Colonic mucosa (tissue), 4 donors: ENCODE measurements at regions of chr2 and their contacts with region 1.

Region 1: GRCh38 chr2:137659612-137660011 is 304.7 kb upstream of the HNMT start:
- DNase-seq: no peak
- H3K4me3 ChIP-seq: no peak overlapping the region
- H3K27ac ChIP-seq: no peak overlapping the region
- H3K4me1 ChIP-seq: no peaks in the 10 kb centered on the region
- H3K27me3 ChIP-seq: no peaks in the 10 kb centered on the region
- CTCF ChIP-seq: no peak

Region 2: GRCh38 chr2:137467246-137467862 is 192.3 kb before region 1 on chr2:
- intact Hi-C with region 1: loop called (anchors 5 kb)
- DNase-seq: peak; percentile 33
- H3K4me3 ChIP-seq: no peak overlapping the region
- H3K27ac ChIP-seq: no peak overlapping the region
- H3K4me1 ChIP-seq: no peaks in the 10 kb centered on the region
- H3K27me3 ChIP-seq: no peaks in the 10 kb centered on the region
- CTCF ChIP-seq: peak; percentile 58